ENCODE measurements at regions of chr14 and their contacts with region 1.

Region 1: DNA sequence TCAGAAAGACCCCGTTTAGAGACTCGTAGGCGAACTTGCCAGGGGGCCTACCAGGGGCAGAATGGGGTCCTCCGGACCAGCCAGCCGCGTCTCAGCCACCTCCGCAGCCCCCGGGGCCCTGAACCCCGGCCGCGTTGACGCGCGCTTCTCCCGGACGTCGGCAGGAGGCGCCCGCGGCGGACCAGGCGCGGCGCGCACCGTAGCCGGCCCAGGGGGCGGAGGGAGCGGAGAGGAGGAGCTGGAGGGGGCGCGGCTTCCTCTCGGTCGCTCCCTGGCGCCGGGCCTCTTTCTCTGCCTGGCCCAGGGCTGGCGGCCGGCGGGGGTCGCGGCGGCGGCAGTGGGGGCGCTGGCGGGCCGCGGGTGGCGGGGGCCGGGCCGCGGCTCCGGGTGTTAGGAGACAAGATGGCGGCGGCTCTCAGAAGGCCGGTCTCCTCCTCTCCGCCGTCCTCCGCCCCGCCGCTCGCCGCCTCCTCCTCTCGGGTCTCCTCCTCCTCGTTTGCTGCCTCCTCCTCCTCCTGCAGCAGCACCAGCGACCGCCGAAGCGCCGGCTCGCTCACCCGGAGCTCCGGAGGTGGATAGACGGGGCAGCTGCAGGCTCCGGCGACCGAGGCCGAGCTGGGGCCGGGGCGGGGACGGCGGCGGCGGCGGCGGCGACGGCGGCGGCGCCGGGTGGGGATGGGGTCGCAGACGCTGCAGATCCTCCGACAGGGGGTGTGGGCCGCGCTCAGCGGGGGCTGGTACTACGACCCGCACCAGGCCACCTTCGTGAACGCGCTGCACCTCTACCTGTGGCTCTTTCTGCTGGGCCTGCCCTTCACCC is at the start of gene PCNX1:
- DNase-seq: peak; percentile 91 to 95 (median 94)
- ATAC-seq: peak; percentile 87
- H3K4me3 ChIP-seq: peak within 1 kb of the TSS; percentile 93
- H3K4me3 Mint-ChIP-seq: peak within 1 kb of the TSS; percentile 87 to 99 (median 94)
- H3K27ac ChIP-seq: peak within 1 kb of the TSS; percentile 87
- H3K27ac Mint-ChIP-seq: peak within 1 kb of the TSS; percentile 93 to 99 (median 97)
- H3K4me1 ChIP-seq: peaks cover 9 to 34% of the 10 kb centered on the region in 2 donors
- H3K4me1 Mint-ChIP-seq: peaks cover 49 to 75% (median 70%) of the 10 kb centered on the region in 7 donors
- H3K27me3 ChIP-seq: no peaks in the 10 kb centered on the region
- H3K27me3 Mint-ChIP-seq: no peaks in the 10 kb centered on the region
- total RNA-seq, gene PCNX1: 80.8 to 114 (median 112) TPM

Region 2: GRCh38 chr14:70655110-70655826 is 252.1 kb before region 1 on chr14:
- CTCF ChIA-PET with region 1: no interaction called
- POLR2A ChIA-PET with region 1: interaction called, 4 read pairs
- intact Hi-C with region 1: loop called in 1 of 2 experiments (anchors 2 kb)
- DNase-seq: peak; percentile 29 to 93 (median 91)
- ATAC-seq: peak; percentile 95
- H3K4me3 ChIP-seq: peak overlapping the region; percentile 43
- H3K4me3 Mint-ChIP-seq: peak overlapping the region; percentile 76 to 89 (median 85)
- H3K27ac ChIP-seq: peak overlapping the region; percentile 84
- H3K27ac Mint-ChIP-seq: peak overlapping the region; percentile 94 to 99 (median 98)
- H3K4me1 ChIP-seq: peaks cover 60 to 83% of the 10 kb centered on the region in 2 donors
- H3K4me1 Mint-ChIP-seq: peaks cover 66 to 98% (median 94%) of the 10 kb centered on the region in 7 donors
- H3K27me3 ChIP-seq: no peaks in the 10 kb centered on the region
- H3K27me3 Mint-ChIP-seq: no peaks in the 10 kb centered on the region

Region 3: GRCh38 chr14:70821584-70822529 is 85.5 kb before region 1 on chr14:
- CTCF ChIA-PET with region 1: interaction called, 9 read pairs
- POLR2A ChIA-PET with region 1: interaction called, 17 read pairs
- intact Hi-C with region 1: loop called (anchors 1 kb)
- DNase-seq: peak in 7 of 9 donors; percentile 27 to 77 (median 38)
- ATAC-seq: peak; percentile 47
- H3K4me3 ChIP-seq: peak overlapping the region; percentile 64
- H3K4me3 Mint-ChIP-seq: peak overlapping the region; percentile 63 to 88 (median 86)
- H3K27ac ChIP-seq: peak overlapping the region; percentile 33
- H3K27ac Mint-ChIP-seq: peak overlapping the region in 3 of 9 donors; percentile 21 to 76 (median 46)
- H3K4me1 ChIP-seq: peaks cover 0 to 15% of the 10 kb centered on the region in 2 donors
- H3K4me1 Mint-ChIP-seq: peaks cover 6 to 36% (median 16%) of the 10 kb centered on the region in 7 donors
- H3K27me3 ChIP-seq: no peaks in the 10 kb centered on the region
- H3K27me3 Mint-ChIP-seq: peaks cover 6 to 34% (median 11%) of the 10 kb centered on the region in 5 donors

Region 4: DNA sequence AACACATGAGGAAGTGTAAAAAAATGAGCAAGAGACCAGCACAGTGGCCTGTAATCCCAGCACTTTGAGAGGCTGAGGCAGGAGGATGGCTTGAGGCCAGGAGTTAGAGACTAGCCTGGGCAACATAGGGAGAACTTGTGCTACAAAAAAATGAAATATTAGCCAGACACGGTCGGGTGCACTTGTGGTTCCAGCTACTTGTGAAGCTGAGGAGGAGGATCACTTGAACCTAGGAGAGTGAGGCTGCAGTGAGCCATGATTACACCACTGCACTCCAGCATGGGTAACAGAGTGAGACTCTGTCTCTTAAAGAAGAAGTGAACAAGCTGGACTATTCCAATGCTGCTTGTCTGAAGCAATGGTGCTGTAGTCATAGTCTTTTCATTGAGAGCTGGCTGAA is 61.8 kb before region 1 on chr14:
- CTCF ChIA-PET with region 1: no interaction called
- POLR2A ChIA-PET with region 1: no interaction called
- intact Hi-C with region 1: no loop called
- DNase-seq: no peak
- ATAC-seq: no peak
- H3K4me3 ChIP-seq: no peak overlapping the region
- H3K4me3 Mint-ChIP-seq: no peak overlapping the region
- H3K27ac ChIP-seq: no peak overlapping the region
- H3K27ac Mint-ChIP-seq: no peak overlapping the region
- H3K4me1 ChIP-seq: no peaks in the 10 kb centered on the region
- H3K4me1 Mint-ChIP-seq: peaks cover 0 to 6% (median 0%) of the 10 kb centered on the region in 7 donors
- H3K27me3 ChIP-seq: no peaks in the 10 kb centered on the region
- H3K27me3 Mint-ChIP-seq: peaks cover 0 to 19% (median 0%) of the 10 kb centered on the region in 5 donors

Region 5: DNA sequence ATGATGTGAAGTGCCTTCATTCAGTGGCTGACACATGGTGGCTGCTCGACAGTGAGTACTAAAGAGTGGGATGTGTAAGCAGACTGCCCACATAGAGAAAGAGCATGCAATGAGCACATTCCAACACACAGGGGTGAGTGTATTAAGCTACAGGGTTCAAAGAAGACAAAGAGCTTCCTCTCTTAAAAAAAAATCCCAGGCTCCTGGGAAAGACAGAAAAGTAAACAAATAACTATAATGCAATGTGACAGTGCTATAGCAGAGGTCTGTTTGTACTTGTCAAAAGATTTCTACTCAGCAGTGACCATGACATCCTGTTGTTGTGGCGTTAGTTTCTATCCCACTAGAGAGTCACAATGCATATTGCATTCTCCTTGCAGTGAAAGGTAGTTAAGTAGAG is 12.5 kb before region 1 on chr14:
- CTCF ChIA-PET with region 1: interaction called, 8 read pairs
- POLR2A ChIA-PET with region 1: interaction called, 56 read pairs
- intact Hi-C with region 1: loop called (anchors 1 kb)
- DNase-seq: no peak
- ATAC-seq: no peak
- H3K4me3 ChIP-seq: no peak overlapping the region
- H3K4me3 Mint-ChIP-seq: peak overlapping the region in 3 of 10 donors; percentile 30 to 69 (median 67)
- H3K27ac ChIP-seq: no peak overlapping the region
- H3K27ac Mint-ChIP-seq: peak overlapping the region in 5 of 9 donors; percentile 3 to 74 (median 21)
- H3K4me1 ChIP-seq: peaks cover 10 to 31% of the 10 kb centered on the region in 2 donors
- H3K4me1 Mint-ChIP-seq: peaks cover 31 to 75% (median 50%) of the 10 kb centered on the region in 7 donors
- H3K27me3 ChIP-seq: no peaks in the 10 kb centered on the region
- H3K27me3 Mint-ChIP-seq: peaks cover 0 to 5% (median 0%) of the 10 kb centered on the region in 5 donors

Region 6: GRCh38 chr14:70942342-70942706 is 34.9 kb after region 1 on chr14:
- CTCF ChIA-PET with region 1: interaction called, 29 read pairs
- POLR2A ChIA-PET with region 1: interaction called, 68 read pairs
- intact Hi-C with region 1: loop called (anchors 1 kb)
- DNase-seq: no peak
- ATAC-seq: no peak
- H3K4me3 ChIP-seq: no peak overlapping the region
- H3K4me3 Mint-ChIP-seq: peak overlapping the region in 9 of 10 donors; percentile 33 to 86 (median 58)
- H3K27ac ChIP-seq: peak overlapping the region; percentile 12
- H3K27ac Mint-ChIP-seq: peak overlapping the region; percentile 26 to 99 (median 91)
- H3K4me1 ChIP-seq: peaks cover 17 to 21% of the 10 kb centered on the region in 2 donors
- H3K4me1 Mint-ChIP-seq: peaks cover 47 to 86% (median 82%) of the 10 kb centered on the region in 7 donors
- H3K27me3 ChIP-seq: no peaks in the 10 kb centered on the region
- H3K27me3 Mint-ChIP-seq: no peaks in the 10 kb centered on the region

Region 7: DNA sequence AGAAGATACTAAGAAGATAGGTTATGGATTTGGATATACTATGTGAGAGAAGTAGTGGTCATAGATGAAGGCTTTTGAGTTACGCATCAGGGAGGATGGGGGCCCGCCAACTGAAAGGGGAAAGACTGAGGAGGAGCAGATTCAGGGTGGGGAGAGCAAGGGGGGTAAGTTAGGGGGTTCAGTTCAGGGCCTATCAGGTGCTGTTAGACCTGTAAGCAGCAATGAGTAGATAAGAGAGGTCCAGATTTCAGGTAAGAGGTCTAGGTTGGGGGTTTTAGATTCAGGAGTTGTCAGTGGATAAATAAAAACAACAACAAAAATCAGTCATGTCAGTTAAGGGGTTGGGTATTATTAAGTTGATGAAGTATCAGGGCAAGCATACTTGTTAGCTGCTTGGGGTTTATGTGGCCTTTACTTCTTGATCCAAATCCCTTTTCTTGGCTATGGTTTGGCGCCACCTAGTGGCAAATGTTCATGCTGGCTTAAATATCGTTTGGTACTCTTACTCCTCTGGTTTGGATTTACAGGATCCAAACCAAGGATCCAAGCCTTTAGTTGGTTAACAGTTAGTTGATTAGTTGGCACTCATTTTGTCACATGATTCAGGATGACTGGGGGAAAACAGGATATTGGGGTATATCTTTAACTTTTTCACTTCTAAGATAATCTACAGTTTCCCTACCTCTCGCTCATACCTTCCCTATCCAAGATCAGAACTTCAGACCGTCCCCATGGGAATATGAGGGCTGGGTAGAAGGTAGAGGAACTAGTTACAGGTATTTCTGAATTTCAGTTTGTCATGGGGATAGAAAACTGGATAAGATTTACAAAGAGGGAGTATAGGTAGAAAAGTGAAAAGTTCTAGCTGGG is 65.0 kb after region 1 on chr14:
- CTCF ChIA-PET with region 1: interaction called, 25 read pairs
- POLR2A ChIA-PET with region 1: interaction called, 7 read pairs
- intact Hi-C with region 1: loop called (anchors 1 kb)
- DNase-seq: peak; percentile 64 to 80 (median 75)
- ATAC-seq: peak; percentile 91
- H3K4me3 ChIP-seq: no peak overlapping the region
- H3K4me3 Mint-ChIP-seq: peak overlapping the region in 2 of 10 donors; percentile 6 to 51
- H3K27ac ChIP-seq: peak overlapping the region; percentile 54
- H3K27ac Mint-ChIP-seq: peak overlapping the region in 8 of 9 donors; percentile 38 to 89 (median 77)
- H3K4me1 ChIP-seq: peaks cover 9 to 13% of the 10 kb centered on the region in 2 donors
- H3K4me1 Mint-ChIP-seq: peaks cover 13 to 70% (median 54%) of the 10 kb centered on the region in 7 donors
- H3K27me3 ChIP-seq: no peaks in the 10 kb centered on the region
- H3K27me3 Mint-ChIP-seq: no peaks in the 10 kb centered on the region

Measured in naive thymus-derived CD4-positive, alpha-beta T cell (primary cell).